Activated T-helper 2 cell treated with anti-CD3 and anti-CD28 coated beads, Interferon-gamma antibody, Interleukin-2, Interleukin-4, amounts not matched to agents 10 μg/mL and 5 μg/mL and 100 μg/mL, durations not matched to agents 14 hours and 24 hours and 36 hours (primary cell): ENCODE measurements at regions of chr6 and their contacts with region 1.

Region 1: DNA sequence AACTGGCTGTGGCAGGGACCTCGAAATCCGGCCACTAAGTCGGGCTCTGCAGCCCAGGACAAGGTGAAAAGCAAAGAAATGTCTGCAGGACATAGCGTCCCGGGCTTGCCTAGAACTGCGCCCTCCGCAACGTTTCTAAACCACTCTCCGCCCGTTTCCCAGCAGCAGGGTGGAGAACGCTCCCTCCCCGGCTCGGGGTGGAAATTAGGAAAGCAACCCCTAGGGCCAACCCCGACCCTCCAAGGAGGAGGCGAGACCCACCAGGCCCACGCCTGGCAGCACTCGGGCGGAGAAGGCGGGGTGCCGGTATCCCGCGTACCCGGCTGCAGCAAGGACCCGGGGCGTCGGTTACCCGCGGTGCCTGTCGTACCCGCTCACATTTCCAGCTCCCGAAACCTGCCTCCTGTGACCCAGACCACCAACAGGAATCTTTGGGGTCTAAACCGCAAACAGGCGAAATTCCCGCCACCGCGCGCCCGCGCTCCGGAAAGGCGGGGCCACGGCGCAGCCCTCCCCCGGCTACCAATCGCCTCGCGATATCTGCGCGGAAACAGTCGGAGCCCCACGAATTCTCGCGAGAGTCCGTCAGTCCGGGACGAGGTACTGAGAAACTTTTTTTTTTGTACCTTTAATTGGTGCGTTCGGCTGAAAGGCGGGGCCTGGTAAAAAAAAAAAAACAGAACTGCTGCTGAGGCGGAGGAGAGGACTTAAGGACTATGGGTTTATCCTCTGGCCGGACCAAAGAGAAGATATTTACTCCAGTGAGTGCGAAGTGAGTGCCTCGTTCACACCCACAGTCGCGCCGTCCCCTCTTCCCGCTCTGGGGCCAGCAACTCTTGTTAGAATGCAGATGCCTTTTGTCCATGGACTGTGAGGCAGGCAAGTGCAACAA is at the start of gene MMS22L:
- DNase-seq: peak; percentile 92
- H3K4me3 Mint-ChIP-seq: peak within 1 kb of the TSS; percentile 89
- H3K27ac Mint-ChIP-seq: peak within 1 kb of the TSS; percentile 81
- H3K4me1 Mint-ChIP-seq: peaks cover 25% of the 10 kb centered on the region
- H3K27me3 Mint-ChIP-seq: peaks cover 12% of the 10 kb centered on the region
- total RNA-seq, gene MMS22L: 50.5 and 56.4 TPM in 2 replicates

Region 2: DNA sequence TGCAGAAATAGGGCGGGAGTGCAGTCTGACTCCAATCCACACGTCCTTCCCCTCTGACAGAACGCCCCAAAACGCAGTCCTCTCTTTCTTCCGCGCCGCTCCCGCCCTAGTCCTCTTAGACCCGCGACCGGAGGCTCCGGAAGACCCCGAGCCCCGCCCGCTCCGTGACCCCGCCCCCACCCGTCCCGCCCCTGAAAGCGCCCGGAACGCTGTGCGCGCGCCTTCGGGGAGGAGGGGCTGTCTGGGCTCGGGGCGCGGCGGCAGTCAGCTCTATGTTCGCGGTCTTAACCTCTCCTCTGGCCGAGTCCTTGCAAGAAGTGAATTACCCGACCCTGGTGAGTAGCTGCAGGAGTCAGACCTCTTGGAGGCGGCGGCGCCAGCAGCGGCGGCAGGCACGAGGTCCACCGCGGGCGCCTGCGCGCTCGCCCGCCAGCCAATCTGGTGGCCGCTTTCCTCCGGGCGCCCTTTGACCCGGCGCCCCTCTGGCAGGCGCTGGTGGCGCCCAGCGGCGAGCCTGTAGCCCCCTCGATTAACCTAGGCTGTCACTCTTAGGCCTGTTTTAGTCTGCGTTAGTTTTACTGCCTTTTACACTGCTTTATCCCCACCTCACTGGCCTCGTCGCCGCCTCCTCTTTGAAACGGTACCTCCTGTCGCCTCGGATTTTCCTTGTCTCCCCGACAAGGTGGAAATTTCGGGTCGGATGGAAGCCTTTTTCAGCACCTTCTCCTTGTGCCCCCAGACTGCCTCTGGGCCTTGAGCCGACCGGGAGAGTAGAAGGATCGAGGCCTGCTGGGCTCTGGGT is 1705.5 kb before region 1 on chr6 and contains the start of gene MANEA:
- intact Hi-C with region 1: loop called (anchors 10 kb)
- DNase-seq: peak; percentile 79
- H3K4me3 Mint-ChIP-seq: peak within 1 kb of the TSS; percentile 95
- H3K27ac Mint-ChIP-seq: peak within 1 kb of the TSS; percentile 99
- H3K4me1 Mint-ChIP-seq: peaks cover 45% of the 10 kb centered on the region
- H3K27me3 Mint-ChIP-seq: no peaks in the 10 kb centered on the region
- total RNA-seq, gene MANEA: 22.5 and 23.1 TPM in 2 replicates

Region 3: GRCh38 chr6:95882371-95882770 is 1400.6 kb before region 1 on chr6:
- intact Hi-C with region 1: no loop called
- DNase-seq: no peak
- H3K4me3 Mint-ChIP-seq: no peak overlapping the region
- H3K27ac Mint-ChIP-seq: no peak overlapping the region
- H3K4me1 Mint-ChIP-seq: no peaks in the 10 kb centered on the region
- H3K27me3 Mint-ChIP-seq: no peaks in the 10 kb centered on the region

Region 4: DNA sequence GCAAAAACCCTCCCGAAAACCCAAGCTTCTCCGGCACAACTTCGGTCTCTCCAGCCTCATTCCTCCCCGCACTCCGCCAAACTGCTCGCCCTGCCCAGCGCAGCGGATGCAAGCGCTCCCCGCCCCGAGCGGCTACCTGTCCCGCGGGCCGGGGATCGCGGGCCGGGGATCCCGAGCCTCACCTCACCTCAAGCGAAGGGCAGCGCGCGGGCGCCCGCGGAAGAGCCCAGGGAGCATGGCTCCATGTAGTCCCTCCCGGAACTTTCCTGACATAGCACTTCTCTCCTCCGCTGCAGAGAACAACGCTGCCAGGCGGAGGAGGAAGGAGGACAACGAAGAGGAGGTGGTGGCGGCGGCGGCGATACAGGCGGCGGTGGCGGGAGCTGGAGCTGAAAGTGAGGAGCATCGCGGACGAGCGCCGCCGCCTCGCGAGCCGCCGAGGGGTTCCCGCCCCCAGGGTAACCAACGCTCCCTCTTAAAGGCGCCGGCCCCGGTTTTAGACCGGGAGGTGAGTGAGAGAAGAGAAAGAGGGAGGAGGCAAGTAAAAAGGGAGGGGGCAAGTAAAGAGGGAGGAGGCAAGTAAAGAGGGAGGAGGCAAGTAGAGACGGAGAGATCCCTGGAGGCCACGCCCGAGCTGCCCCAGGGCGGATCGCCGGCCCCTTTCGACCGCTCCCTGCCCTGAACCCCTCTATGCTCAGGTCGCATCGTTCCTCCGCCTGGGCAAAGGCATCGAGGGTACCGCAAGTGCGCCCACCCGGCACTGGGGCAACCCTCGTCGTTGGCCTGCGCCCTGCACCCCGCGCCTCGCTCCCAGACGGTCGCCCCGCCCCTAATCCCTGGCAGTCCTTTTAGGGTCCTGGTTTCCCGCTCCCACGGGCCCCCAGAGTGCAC is 445.6 kb before region 1 on chr6 and contains the start of gene GPR63:
- intact Hi-C with region 1: loop called (anchors 1 kb)
- DNase-seq: peak; percentile 84
- H3K4me3 Mint-ChIP-seq: peak within 1 kb of the TSS; percentile 90
- H3K27ac Mint-ChIP-seq: peak within 1 kb of the TSS; percentile 43
- H3K4me1 Mint-ChIP-seq: peaks cover 34% of the 10 kb centered on the region
- H3K27me3 Mint-ChIP-seq: peaks cover 24% of the 10 kb centered on the region
- total RNA-seq, gene GPR63: 4.5 and 5.0 TPM in 2 replicates

Region 5: GRCh38 chr6:96963809-96964208 is 319.2 kb before region 1 on chr6:
- intact Hi-C with region 1: no loop called
- DNase-seq: no peak
- H3K4me3 Mint-ChIP-seq: no peak overlapping the region
- H3K27ac Mint-ChIP-seq: no peak overlapping the region
- H3K4me1 Mint-ChIP-seq: no peaks in the 10 kb centered on the region
- H3K27me3 Mint-ChIP-seq: no peaks in the 10 kb centered on the region

Region 6: DNA sequence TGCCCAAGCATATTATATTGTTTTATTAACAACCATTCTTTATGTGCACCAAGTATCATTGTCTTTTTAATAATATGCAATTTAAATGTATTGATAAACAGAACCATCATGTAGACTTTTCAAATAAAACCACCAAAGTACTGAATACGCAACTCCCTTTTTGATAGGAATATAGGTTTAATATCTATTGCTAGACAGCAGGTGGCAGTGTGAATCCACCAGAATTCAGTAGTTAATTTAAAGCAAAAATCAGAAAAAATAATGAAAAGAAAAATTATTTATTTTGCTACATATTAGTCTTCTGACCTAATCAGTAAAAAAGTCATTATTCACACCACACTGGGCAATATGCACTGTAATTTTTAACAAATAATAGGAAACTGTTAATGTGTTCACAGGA is 214.8 kb before region 1 on chr6:
- intact Hi-C with region 1: loop called (anchors 5 kb)
- DNase-seq: no peak
- H3K4me3 Mint-ChIP-seq: no peak overlapping the region
- H3K27ac Mint-ChIP-seq: no peak overlapping the region
- H3K4me1 Mint-ChIP-seq: peaks cover 10% of the 10 kb centered on the region
- H3K27me3 Mint-ChIP-seq: no peaks in the 10 kb centered on the region

Region 7: DNA sequence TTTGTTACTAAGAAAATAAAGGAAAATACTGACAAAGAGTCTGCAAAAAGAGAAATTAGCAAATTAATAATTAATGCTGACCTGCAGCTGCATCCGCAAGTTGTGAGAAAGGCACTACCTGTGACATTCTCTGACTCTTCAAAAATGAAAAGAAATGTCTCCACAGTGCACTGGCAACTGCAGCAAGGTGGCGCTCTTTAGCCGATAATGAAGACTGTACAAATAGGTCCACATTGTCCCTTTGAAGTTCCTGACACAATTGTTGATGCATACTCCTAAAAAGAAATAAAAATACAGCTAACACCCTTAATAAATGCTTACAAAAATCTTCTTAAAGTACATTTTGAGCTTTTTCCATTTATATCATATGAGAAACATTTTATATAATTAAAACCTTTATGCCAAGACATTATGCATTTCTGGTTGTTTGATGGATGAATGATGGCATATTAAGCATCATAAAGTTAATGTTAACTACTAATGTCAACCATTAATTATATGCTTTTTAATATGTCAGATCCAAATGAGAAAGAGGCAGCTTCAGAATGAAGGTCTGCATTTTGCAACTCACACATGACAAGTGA is 96.5 kb before region 1 on chr6:
- intact Hi-C with region 1: loop called (anchors 5 kb)
- DNase-seq: peak; percentile 41
- H3K4me3 Mint-ChIP-seq: no peak overlapping the region
- H3K27ac Mint-ChIP-seq: no peak overlapping the region
- H3K4me1 Mint-ChIP-seq: peaks cover 3% of the 10 kb centered on the region
- H3K27me3 Mint-ChIP-seq: no peaks in the 10 kb centered on the region

Region 8: GRCh38 chr6:97535800-97536199 is 252.8 kb after region 1 on chr6:
- intact Hi-C with region 1: no loop called
- DNase-seq: no peak
- H3K4me3 Mint-ChIP-seq: no peak overlapping the region
- H3K27ac Mint-ChIP-seq: no peak overlapping the region
- H3K4me1 Mint-ChIP-seq: no peaks in the 10 kb centered on the region
- H3K27me3 Mint-ChIP-seq: no peaks in the 10 kb centered on the region

Region 9: DNA sequence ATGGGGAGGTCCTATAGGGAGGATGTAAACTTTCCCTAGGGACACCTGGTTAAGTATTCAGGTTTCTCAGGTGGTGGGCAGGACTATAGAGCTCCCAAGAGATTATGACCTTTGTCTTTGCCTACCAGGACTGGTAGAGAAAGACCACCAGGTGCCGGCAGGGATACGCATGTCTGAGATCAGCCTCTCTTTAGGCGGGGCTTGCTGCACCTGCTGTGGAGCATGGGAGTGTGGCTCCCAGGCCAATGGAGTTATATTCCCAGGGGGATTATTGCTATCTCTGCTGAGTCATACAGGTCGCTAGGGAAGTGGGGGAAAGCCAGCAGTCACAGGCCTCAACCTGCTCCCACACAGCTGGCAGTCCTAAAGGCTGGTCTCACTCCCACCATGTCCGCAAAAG is 280.6 kb after region 1 on chr6:
- intact Hi-C with region 1: no loop called
- DNase-seq: no peak
- H3K4me3 Mint-ChIP-seq: no peak overlapping the region
- H3K27ac Mint-ChIP-seq: no peak overlapping the region
- H3K4me1 Mint-ChIP-seq: no peaks in the 10 kb centered on the region
- H3K27me3 Mint-ChIP-seq: no peaks in the 10 kb centered on the region